Mammary epithelial cell (primary cell): ENCODE measurements at regions of chr18 and their contacts with region 1.

Region 1: DNA sequence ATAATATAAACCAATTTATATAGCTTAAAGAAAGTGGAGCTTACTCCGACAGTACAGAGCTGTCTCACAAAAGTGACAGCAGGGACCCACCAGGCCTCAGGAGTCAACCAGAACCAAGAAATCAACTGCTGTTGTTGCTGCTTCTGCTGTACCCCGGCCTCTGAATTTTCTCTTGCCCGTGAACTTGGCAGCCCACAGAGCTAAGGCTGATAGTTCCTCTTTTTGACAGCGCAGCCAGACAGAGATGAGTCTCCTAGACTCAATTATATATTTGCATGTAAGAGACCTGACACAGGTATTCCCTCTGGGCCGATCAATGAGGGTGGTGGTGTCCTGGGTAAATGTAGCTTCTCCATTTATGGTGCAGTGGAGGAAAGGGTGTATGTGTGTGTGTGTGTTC is 109.4 kb downstream of the KCTD1 start:
- DNase-seq: no peak
- H3K4me3 ChIP-seq: no peak overlapping the region
- H3K27ac ChIP-seq: no peak overlapping the region
- H3K4me1 ChIP-seq: peaks cover 43% of the 10 kb centered on the region
- H3K27me3 ChIP-seq: no peaks in the 10 kb centered on the region
- CTCF ChIP-seq: no peak

Region 2: GRCh38 chr18:26370037-26370436 is 68.9 kb before region 1 on chr18:
- CTCF ChIA-PET with region 1: no interaction called
- dilution Hi-C with region 1: loop called (anchors 5 kb)
- in situ Hi-C with region 1: no loop called
- intact Hi-C with region 1: no loop called
- DNase-seq: no peak
- H3K4me3 ChIP-seq: no peak overlapping the region
- H3K27ac ChIP-seq: no peak overlapping the region
- H3K4me1 ChIP-seq: no peaks in the 10 kb centered on the region
- H3K27me3 ChIP-seq: no peaks in the 10 kb centered on the region
- CTCF ChIP-seq: no peak

Region 3: DNA sequence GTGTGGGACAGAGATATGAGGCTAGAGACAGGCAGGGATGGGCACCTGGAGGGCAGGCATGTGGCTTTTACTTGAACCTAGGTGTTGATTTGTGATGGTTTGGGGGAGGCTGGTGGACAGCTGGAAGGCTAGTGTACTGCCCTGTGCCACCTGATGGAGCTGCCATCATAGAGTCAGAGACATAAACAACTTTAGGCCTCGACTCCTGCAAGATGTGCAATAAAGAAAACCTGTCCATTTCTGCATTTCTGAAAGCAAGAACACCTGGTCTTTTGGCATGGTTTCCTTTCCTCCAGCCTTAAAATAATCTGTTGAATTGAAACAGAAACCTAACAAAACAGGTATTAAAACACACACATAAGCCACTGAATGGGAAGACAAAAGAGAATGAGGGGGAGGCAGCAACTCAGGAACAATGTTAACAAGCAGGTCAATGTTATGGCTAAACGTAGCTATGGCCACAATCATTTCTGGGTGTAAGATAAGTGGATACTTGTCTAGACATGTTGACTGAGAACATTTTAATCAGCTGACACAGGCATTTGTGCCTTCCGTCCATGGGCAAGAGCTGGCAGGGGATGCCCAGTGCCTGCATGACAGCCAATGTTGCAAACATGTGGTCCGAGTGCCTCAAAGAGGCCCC is 21.6 kb after region 1 on chr18:
- CTCF ChIA-PET with region 1: interaction called, 22 read pairs
- dilution Hi-C with region 1: no loop called
- in situ Hi-C with region 1: no loop called
- intact Hi-C with region 1: no loop called
- DNase-seq: peak; percentile 92
- H3K4me3 ChIP-seq: no peak overlapping the region
- H3K27ac ChIP-seq: peak overlapping the region; percentile 89
- H3K4me1 ChIP-seq: peaks cover 36% of the 10 kb centered on the region
- H3K27me3 ChIP-seq: no peaks in the 10 kb centered on the region
- CTCF ChIP-seq: no peak

Region 4: DNA sequence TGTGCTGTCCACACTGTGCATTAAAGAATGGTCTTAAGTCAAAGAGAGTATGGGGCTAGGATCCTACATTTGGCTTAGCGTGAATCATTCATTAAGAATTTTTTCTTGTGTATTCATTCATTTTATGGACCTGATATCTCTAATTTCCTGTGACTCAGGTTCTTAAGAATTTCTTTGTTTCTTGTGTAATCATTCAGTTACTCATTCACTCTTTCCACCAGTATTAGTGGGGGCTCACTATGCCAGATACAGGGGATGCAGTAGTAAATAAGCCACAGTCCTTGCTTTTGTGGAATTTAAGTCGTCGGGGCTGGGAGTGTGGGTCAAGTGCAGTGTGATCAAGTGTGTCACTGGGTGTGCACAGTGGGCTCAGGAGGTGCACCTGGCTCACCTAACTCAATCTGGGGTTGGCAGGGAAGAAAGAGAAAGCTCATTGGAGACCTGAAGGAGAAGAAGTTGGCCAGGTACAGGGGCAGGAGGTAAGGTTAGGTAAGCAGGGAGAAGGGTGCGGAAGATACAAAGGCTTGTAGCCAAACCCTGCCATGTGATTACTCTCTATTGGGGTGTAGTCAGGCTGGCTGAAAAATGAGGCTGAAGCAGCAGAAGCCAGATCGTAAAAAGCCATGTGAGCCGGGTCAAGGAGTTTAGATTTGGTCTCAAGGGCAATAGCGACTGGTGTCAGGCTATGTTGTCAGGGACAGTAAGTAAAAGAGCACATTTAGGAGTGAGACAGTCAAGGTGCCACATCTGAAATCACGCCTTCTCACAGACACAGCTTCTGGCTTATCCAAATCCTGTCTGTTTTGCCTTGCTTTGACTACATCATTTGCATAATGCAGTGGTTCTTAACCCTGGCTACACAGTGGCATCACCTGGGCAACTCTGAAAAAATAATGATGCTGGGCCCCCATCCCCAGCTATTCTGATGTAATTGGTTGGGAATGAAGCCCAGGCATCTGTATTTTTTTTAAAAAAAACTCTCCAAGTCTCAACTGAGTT is 42.2 kb after region 1 on chr18:
- CTCF ChIA-PET with region 1: no interaction called
- dilution Hi-C with region 1: no loop called
- in situ Hi-C with region 1: no loop called
- intact Hi-C with region 1: loop called (anchors 2 kb)
- DNase-seq: peak; percentile 87
- H3K4me3 ChIP-seq: peak overlapping the region in 2 of 3 experiments; percentile 4 to 25
- H3K27ac ChIP-seq: peak overlapping the region; percentile 97
- H3K4me1 ChIP-seq: peaks cover 83% of the 10 kb centered on the region
- H3K27me3 ChIP-seq: no peaks in the 10 kb centered on the region
- CTCF ChIP-seq: no peak

Region 5: DNA sequence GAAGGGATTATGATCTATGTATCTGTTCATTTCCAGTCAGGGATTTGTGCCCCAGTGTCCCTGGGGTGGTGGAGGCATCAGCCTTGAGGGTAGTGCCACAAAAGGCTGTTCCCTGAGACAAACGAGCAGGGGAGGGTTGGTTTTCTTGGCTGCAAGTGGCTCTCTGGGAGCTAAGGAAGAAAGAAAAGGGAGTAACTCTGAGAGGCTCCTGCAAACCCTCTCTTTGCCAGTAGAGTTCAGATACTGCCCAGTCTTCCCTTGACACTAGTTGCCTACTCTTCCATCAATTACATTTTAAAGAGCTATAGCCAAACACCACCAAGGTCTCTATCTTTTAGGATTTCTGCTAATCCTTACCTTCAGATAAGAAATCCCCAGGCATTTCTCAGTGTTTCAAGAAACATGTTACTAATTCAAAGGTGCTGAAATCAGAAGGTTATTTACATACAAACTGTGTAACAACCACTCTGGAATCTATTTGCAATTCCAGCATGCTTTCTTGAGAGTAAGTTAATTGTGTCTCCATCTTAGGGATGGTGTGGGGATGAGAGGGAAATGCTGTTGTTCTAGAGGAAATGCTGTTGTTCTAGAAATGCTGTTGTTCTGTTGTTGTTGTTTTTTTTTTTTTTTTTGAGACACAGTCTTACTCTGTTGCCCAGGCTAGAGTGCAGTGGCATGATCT is 128.0 kb after region 1 on chr18:
- CTCF ChIA-PET with region 1: interaction called, 17 read pairs
- dilution Hi-C with region 1: no loop called
- in situ Hi-C with region 1: no loop called
- intact Hi-C with region 1: no loop called
- DNase-seq: no peak
- H3K4me3 ChIP-seq: no peak overlapping the region
- H3K27ac ChIP-seq: no peak overlapping the region
- H3K4me1 ChIP-seq: no peaks in the 10 kb centered on the region
- H3K27me3 ChIP-seq: no peaks in the 10 kb centered on the region
- CTCF ChIP-seq: peak in 1 of 2 donors; percentile 18